Left cardiac atrium (tissue), 4 donors: ENCODE measurements at regions of chrX and their contacts with region 1.

Region 1: DNA sequence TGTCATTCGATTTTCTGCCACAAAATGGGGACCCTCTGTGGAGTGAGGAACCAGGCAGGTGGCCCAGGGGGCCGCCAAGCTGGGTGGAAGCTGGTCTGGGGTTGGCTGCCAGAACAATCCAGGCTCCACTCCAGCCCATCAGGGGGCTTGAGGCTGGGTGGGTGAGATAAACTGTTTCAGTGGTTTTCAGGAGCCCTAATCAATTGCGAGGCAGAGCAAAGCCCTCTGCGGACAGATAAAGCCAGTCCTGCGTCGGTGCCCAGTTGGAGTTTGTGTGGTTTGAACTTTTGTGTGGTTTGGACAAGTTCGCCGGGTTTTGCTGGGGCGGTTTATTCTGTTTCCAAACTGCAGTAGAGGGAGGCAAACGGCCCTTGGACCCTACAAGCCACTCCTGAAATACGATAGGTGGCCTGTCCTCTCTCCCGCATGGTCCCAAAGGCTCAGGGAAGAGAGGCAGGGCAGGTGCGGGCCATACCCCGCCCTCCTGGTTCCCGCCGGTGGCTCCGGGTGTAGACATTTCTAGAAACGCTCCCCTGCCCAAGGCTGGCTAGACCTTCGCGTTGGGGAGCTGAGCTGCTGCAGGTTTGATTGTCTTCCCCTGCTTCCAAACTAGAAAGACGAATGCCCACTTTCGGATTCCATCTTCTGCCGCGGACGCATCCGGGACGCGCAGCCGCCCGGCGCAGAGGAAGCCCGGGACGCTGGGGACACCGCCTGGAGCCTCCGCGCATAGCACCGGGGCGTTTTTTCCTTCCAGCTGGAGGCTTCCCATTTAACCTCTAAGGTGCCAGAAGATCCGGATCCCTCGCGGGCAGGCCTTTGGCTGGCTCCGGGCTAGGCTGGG is 169.0 kb upstream of the BCOR start:
- DNase-seq: peak; percentile 72
- ATAC-seq: peak; percentile 88 to 91

Region 2: GRCh38 chrX:39730662-39731397 is 535.9 kb before region 1 on chrX:
- intact Hi-C with region 1: loop called in 1 of 2 experiments (anchors 10 kb)
- DNase-seq: peak; percentile 80
- ATAC-seq: peak; percentile 80 to 84

Region 3: DNA sequence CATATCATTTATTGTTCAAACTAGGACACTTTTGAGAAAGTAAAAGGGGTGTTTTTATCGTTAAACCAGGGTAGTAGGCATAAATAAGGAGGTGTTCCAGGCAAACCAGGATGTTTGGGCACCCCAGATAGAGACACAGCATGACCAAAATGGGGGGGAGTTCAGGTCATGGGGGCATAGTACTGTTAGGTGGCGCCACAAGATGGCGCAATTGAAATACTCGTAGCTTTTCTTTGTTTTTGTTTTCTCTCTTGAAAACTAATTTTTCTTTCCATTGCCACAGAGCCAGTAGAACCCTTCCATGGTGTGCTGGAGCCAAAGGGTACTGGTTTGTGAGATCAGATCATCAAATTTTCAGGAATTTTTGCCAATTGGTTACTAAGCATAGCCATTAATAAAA is 452.3 kb before region 1 on chrX:
- intact Hi-C with region 1: loop called in 1 of 2 experiments (anchors 10 kb)
- DNase-seq: peak; percentile 37
- ATAC-seq: peak in 1 of 2 donors; percentile 10

Region 4: DNA sequence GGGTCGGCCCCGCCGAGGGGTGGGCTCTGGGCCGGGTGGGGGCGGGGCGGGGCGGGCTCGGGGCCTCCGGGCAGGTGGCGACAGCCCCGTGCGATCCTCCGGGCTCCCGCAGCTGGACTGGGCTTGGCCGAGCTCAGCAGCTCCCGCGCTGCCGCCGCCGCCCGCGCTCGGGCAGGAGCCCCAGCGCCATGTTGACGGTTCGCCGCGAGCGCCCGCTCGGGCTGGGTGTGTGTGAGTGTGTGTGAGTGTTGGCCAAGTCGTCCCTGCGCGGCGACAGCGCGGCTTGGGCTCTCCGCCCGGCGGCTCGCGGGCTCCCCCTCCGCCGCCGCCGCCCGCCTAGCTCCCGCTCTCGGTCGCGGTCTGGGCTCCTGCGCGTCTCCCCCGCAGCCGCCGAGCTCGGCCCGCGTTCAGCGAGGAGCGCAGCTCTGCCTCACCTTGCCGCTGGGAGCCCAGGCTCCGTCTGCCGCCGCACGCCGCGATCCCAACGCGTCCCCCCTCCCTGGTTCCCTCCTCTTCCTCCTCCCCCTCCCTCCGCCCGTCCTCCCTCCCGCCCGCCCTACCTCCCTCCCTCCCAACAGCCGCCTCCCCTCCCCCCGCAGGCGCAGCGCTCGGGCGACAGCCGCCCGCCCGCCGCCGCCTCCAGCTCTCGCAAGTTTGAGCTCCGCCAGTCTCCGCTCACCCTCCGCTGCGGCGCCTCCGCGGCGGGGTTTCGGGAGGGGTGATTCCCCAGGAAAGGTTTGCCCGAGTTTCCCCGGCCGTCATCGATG is 169.0 kb before region 1 on chrX and contains the start of gene BCOR:
- intact Hi-C with region 1: loop called in 1 of 2 experiments (anchors 10 kb)
- DNase-seq: peak; percentile 78
- ATAC-seq: peak; percentile 51 to 55
- total RNA-seq, gene BCOR: 10.8 to 21.6 TPM

Region 5: DNA sequence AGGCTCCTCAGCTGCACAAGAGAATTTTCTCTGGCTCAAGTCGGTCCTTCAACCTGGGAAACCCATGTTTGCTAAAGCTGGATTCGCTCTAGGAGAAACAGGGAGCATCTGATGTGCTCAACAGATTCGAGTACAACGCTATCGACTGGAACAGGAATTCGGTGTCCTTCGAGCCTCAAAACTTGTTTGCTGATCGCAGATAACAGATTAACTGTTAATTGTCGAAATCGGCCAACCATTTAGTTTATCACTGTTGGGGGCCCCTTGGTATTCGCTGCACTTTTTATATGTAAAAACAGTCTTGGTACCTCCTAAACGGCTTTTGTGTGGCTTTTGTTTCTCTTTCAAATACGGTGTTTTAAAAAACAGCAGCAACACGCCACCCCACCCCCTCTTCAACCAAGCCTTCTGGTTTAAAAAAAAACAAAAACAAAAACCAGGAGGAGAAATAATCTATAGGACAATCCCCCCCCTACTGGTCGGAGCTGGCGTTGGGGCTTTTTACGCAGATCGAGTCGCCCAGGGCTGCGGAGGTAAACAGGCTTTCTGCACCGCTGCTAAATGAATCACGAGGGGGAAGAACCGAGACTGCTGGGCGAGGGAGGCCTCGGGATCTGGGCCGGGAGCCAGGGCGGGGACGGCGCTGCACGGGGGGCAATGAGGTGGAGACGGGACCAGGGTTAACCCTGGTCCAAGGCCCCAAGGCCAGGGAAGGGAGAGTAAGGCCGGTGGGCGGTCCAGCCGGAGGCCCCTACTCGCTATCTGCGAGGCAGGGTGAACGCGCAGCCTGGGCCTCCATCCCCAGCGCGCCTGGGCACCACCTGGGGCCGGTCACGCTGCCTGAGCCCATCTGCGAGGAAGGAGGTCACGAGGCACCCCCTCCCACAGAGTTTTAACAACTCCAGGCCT is 97.3 kb before region 1 on chrX:
- intact Hi-C with region 1: loop called in 1 of 2 experiments (anchors 10 kb)
- DNase-seq: no peak
- ATAC-seq: peak in 1 of 2 donors; percentile 7

Region 6: GRCh38 chrX:40685362-40685918 is 418.7 kb after region 1 on chrX:
- intact Hi-C with region 1: no loop called
- DNase-seq: no peak
- ATAC-seq: no peak